Head of caudate nucleus (tissue), 42 donors: ENCODE measurements at regions of chr10 and their contacts with region 1.

Region 1: DNA sequence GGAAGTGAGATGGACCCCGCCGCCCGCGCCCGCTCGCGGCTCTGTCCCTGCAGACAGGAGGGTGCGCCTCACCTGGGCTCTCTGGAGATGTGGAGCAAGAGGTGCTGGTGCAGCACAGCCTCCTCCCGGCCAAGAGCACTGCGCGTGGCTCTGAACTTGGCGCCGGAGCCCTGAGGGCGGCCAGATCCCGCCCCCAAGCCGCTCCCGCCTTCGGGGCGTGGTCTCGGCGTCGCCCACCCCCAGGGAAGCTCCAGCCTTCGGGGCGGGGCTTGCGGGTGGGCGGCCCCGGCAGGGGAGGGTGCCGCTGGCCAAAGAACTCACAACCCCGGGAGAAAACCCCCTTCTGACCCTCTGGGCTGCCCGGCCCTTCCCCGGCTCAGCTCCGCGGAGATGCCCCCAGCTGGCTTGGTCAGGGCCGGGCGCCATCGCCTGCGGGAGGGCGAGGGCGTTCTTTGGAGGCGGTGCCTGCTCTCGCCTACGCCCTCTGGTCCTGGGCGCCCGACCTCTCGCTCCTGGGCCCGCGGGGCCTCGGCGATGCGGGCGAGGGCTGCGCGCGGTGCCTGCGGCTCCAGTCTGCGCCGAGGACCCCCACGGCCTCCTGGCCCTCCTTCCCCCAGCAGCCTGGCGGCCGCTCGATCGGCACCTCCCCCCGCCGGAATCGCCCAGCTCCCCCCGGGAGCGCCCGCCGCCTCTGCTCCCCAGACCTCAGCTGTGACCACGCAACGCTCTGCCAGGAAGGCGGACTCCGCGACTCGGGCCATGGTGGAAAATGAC is at the start of gene ZNF488:
- DNase-seq: peak; percentile 71 to 95 (median 91)

Region 2: GRCh38 chr10:46106410-46107255 is 1277.7 kb before region 1 on chr10:
- intact Hi-C with region 1: loop called (anchors 5 kb)
- DNase-seq: peak in 41 of 42 donors; percentile 12 to 84 (median 59)